OCI-LY7 (cell line): ENCODE measurements at regions of chr11 and their contacts with region 1.

Region 1: GRCh38 chr11:72222907-72223614 is 1.5 kb upstream of the INPPL1 start:
- DNase-seq: peak; percentile 99
- H3K4me3 ChIP-seq: peak overlapping the region; percentile 77
- H3K27ac ChIP-seq: peak overlapping the region; percentile 91
- H3K4me1 ChIP-seq: peaks cover 51% of the 10 kb centered on the region
- CTCF ChIP-seq: 0 out of 2 replicates have a peak, but pooled peaks have one; percentile 20

Region 2: DNA sequence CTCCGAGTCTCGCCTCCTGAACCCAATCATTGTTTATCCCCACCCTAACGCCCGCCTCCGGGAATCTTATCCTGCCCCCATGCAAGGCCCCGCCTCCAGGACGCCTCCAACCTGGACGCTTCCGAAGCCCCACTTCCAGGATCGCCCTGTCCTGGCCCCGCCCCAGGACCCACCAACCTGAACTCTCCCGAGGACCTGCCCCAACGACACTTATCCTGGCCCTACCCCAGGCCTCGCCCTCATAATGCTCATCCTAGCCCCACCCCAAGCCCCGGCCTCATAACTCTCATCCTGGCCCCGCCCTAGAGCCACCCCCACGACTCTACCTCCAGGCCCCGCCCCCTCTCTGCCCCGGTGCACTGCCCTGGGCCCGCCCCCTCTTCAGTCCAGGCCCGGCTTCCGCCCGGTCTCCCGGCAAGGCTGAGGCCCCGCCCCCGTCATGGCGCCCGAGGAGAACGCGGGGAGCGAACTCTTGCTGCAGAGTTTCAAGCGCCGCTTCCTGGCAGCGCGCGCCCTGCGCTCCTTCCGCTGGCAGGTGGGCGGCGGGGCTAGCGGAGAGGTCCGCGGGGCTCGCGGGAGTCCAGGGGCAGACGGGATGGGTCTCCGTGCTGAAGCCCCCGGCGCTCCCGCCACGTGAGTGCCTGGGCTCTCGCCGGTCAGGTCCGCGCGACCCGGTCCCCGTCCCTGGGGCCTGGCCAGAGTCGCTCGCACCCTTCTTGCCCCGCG is 435.8 kb before region 1 on chr11:
- CTCF ChIA-PET with region 1: no interaction called
- POLR2A ChIA-PET with region 1: no interaction called
- intact Hi-C with region 1: loop called (anchors 5 kb)
- DNase-seq: peak; percentile 96
- H3K4me3 ChIP-seq: peak overlapping the region; percentile 85
- H3K27ac ChIP-seq: peak overlapping the region; percentile 70
- H3K4me1 ChIP-seq: peaks cover 27% of the 10 kb centered on the region
- CTCF ChIP-seq: no peak

Region 3: DNA sequence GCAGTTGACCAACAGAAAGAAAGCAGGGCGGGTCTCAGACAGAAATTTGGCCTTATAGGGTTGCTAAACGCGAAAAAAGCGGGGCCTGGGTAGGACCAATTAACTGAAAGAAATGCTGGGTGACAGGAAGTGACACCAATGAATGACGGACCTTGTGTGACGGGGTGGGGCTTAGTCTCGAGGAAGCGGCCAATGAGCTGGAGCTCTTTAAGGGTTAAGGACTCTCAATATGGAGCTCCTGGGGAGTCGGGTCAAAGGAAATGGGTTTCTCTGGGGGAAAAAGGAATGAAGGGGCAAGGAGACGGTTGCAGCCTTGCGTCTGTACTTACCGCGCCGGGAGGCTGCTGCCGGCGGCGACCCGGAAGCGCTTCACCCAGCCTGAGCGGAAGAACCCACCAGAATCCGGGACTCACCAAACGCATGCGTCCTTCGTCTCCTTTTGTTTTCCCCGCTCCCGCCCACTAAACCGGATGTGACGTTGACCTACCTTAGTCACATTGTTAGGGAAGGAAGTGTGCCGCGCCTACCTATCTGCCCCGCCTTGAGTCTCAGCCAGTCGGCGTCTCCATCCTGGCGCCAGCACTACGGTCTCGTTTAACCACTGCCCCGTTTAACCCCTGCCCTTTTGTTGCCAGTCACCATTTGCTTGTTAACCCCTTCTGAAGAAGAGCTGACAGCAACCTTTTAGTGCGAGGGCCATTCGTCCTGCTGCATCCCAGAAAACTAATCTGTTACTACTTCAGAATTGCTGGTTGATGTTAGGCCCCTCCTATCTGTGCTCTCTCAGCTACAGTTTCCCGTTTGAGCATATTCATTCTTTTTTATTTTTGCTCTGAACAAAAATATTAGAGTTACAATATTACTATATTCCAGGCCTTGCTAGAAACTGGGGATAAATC is 110.5 kb before region 1 on chr11 and contains the start of gene ANAPC15:
- CTCF ChIA-PET with region 1: no interaction called
- POLR2A ChIA-PET with region 1: no interaction called
- intact Hi-C with region 1: loop called (anchors 1 kb)
- DNase-seq: peak; percentile 99
- H3K4me3 ChIP-seq: peak within 1 kb of the TSS; percentile 76
- H3K27ac ChIP-seq: peak within 1 kb of the TSS; percentile 78
- H3K4me1 ChIP-seq: peaks cover 19% of the 10 kb centered on the region
- CTCF ChIP-seq: no peak
- total RNA-seq, gene ANAPC15: 48.2 and 77.7 TPM in 2 replicates

Region 4: DNA sequence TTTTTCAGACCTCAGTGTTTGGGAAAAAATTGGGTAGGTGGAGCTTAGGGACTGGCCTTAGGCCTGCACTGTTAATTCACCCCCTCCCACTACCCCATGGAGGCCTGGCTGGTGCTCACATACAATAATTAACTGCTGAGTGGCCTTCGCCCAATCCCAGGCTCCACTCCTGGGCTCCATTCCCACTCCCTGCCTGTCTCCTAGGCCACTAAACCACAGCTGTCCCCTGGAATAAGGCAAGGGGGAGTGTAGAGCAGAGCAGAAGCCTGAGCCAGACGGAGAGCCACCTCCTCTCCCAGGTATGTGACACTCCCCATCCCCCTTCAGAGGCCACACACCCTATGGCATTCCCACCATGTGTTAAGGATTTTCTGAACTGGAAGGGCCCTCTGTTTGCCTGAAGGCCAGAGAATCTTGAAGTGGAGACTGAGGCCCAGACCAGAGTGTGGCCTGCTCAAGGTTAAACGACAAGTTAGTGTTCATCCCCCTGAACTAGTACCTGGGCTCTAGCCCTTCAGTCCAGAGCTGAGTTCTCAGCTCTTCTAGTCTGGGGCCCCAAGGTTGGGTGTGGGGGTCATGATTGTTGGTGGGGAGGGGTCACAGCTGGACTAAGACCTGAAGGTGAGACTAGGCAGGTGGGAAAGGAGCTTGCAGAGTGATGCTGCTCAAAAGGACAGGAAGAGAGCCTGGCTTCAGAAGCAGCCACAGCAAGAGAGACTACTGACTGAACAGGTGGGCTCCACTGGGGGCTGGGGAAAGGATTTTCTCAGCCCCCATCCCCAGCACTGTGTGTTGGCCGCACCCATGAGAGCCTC is 33.4 kb before region 1 on chr11:
- CTCF ChIA-PET with region 1: no interaction called
- POLR2A ChIA-PET with region 1: no interaction called
- intact Hi-C with region 1: no loop called
- DNase-seq: no peak
- H3K4me3 ChIP-seq: no peak overlapping the region
- H3K27ac ChIP-seq: no peak overlapping the region
- H3K4me1 ChIP-seq: no peaks in the 10 kb centered on the region
- CTCF ChIP-seq: no peak

Region 5: GRCh38 chr11:72238040-72238450 is 15.0 kb after region 1 on chr11:
- CTCF ChIA-PET with region 1: interaction called, 3 read pairs
- POLR2A ChIA-PET with region 1: interaction called, 4 read pairs
- intact Hi-C with region 1: loop called (anchors 1 kb)
- DNase-seq: peak; percentile 72
- H3K4me3 ChIP-seq: no peak overlapping the region
- H3K27ac ChIP-seq: no peak overlapping the region
- H3K4me1 ChIP-seq: no peaks in the 10 kb centered on the region
- CTCF ChIP-seq: peak; percentile 88

Region 6: GRCh38 chr11:72430741-72431570 is 207.9 kb after region 1 on chr11:
- CTCF ChIA-PET with region 1: no interaction called
- POLR2A ChIA-PET with region 1: no interaction called
- intact Hi-C with region 1: loop called (anchors 5 kb)
- DNase-seq: peak; percentile 72
- H3K4me3 ChIP-seq: no peak overlapping the region
- H3K27ac ChIP-seq: no peak overlapping the region
- H3K4me1 ChIP-seq: peaks cover 20% of the 10 kb centered on the region
- CTCF ChIP-seq: peak; percentile 90

Region 7: GRCh38 chr11:73157053-73158010 is 934.3 kb after region 1 on chr11:
- CTCF ChIA-PET with region 1: no interaction called
- POLR2A ChIA-PET with region 1: no interaction called
- intact Hi-C with region 1: loop called (anchors 5 kb)
- DNase-seq: peak; percentile 77
- H3K4me3 ChIP-seq: peak overlapping the region; percentile 41
- H3K27ac ChIP-seq: peak overlapping the region; percentile 98
- H3K4me1 ChIP-seq: peaks cover 85% of the 10 kb centered on the region
- CTCF ChIP-seq: no peak